ENCODE measurements at regions of chr16 and their contacts with region 1.

Region 1: GRCh38 chr16:55701442-55702319 is 45.9 kb downstream of the SLC6A2 start:
- DNase-seq: peak; percentile 66 to 68
- H3K4me3 ChIP-seq: no peak overlapping the region
- H3K4me3 Mint-ChIP-seq: no peak overlapping the region
- H3K27ac Mint-ChIP-seq: no peak overlapping the region
- H3K4me1 ChIP-seq: no peaks in the 10 kb centered on the region
- H3K4me1 Mint-ChIP-seq: no peaks in the 10 kb centered on the region
- H3K27me3 ChIP-seq: no peaks in the 10 kb centered on the region
- H3K27me3 Mint-ChIP-seq: peaks cover 14% of the 10 kb centered on the region
- CTCF ChIP-seq: peak; percentile 78 to 86

Region 2: GRCh38 chr16:55494994-55495421 is 206.7 kb before region 1 on chr16:
- CTCF ChIA-PET with region 1: interaction called, 12 read pairs
- POLR2A ChIA-PET with region 1: no interaction called
- intact Hi-C with region 1: loop called (anchors 1 kb)
- DNase-seq: peak; percentile 56 to 69
- H3K4me3 ChIP-seq: no peak overlapping the region
- H3K4me3 Mint-ChIP-seq: no peak overlapping the region
- H3K27ac Mint-ChIP-seq: no peak overlapping the region
- H3K4me1 ChIP-seq: peaks cover 9% of the 10 kb centered on the region; the same call in 1 of the 2 replicates
- H3K4me1 Mint-ChIP-seq: peaks cover 7% of the 10 kb centered on the region
- H3K27me3 ChIP-seq: no peaks in the 10 kb centered on the region
- H3K27me3 Mint-ChIP-seq: no peaks in the 10 kb centered on the region
- CTCF ChIP-seq: peak in 1 of 2 experiments; percentile 41

Region 3: DNA sequence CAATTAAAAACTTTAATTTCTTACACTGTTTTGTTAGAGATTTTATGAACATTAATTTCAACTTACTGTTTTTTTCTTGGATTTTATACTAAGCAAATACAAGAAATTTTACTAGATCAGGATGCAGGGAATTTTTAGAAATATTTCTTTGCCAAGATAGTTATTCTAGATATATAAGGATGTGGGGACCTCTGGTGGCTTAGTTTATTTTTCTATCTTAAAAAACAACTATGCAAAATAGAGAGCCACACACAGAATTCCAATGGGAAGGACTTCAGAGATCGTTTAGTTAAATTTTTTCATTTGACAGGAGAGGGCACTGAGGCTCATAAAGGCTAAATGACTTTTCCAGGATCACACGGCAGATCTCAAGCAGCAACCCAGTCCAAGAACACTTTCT is 158.2 kb before region 1 on chr16:
- CTCF ChIA-PET with region 1: interaction called, 7 read pairs
- POLR2A ChIA-PET with region 1: no interaction called
- intact Hi-C with region 1: loop called (anchors 1 kb)
- DNase-seq: peak in 1 of 2 experiments; percentile 30
- H3K4me3 ChIP-seq: no peak overlapping the region
- H3K4me3 Mint-ChIP-seq: no peak overlapping the region
- H3K27ac Mint-ChIP-seq: no peak overlapping the region
- H3K4me1 ChIP-seq: no peaks in the 10 kb centered on the region; the same call in 1 of the 2 replicates
- H3K4me1 Mint-ChIP-seq: no peaks in the 10 kb centered on the region
- H3K27me3 ChIP-seq: no peaks in the 10 kb centered on the region
- H3K27me3 Mint-ChIP-seq: no peaks in the 10 kb centered on the region
- CTCF ChIP-seq: peak in 1 of 2 experiments; percentile 37

Region 4: DNA sequence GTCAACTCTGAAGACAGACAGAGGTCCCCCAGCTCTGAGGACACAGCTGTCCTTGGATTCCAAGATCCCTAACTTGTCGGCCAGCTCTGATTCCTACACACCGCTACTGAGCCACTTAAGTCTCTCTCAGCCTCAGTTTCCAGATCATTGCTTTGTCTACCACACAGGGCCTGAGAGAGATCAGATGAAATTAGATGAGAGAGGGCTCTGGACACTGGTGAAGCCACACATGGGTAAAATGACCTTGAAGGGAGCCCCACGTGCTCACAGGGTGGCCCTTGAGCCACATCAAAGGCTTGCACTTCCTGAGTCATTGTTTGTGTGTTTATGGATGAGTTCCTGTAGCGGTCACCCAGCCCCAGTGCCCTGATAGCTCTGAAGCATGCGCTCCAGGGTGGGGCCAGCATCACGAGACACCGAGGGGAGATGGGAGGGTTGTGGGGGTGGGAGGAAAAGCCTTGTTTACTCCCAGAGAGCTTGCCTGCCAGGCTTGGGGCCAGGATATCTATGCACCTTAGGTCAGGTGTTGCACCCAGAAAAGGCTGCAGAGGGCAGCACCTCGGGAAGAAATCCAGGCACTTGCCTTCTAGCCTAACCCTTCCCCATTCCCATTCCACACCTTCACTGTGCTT is 78.6 kb before region 1 on chr16:
- CTCF ChIA-PET with region 1: no interaction called
- POLR2A ChIA-PET with region 1: no interaction called
- intact Hi-C with region 1: loop called (anchors 1 kb)
- DNase-seq: peak; percentile 67 to 69
- H3K4me3 ChIP-seq: no peak overlapping the region
- H3K4me3 Mint-ChIP-seq: no peak overlapping the region
- H3K27ac Mint-ChIP-seq: no peak overlapping the region
- H3K4me1 ChIP-seq: no peaks in the 10 kb centered on the region
- H3K4me1 Mint-ChIP-seq: peaks cover 9% of the 10 kb centered on the region
- H3K27me3 ChIP-seq: no peaks in the 10 kb centered on the region
- H3K27me3 Mint-ChIP-seq: peaks cover 5% of the 10 kb centered on the region
- CTCF ChIP-seq: peak; percentile 60 to 65

Region 5: GRCh38 chr16:55643161-55643970 is 58.3 kb before region 1 on chr16:
- CTCF ChIA-PET with region 1: interaction called, 3 read pairs
- POLR2A ChIA-PET with region 1: no interaction called
- intact Hi-C with region 1: loop called (anchors 5 kb)
- DNase-seq: peak in 1 of 2 experiments; percentile 47
- H3K4me3 ChIP-seq: no peak overlapping the region
- H3K4me3 Mint-ChIP-seq: no peak overlapping the region
- H3K27ac Mint-ChIP-seq: no peak overlapping the region
- H3K4me1 ChIP-seq: no peaks in the 10 kb centered on the region
- H3K4me1 Mint-ChIP-seq: no peaks in the 10 kb centered on the region
- H3K27me3 ChIP-seq: no peaks in the 10 kb centered on the region
- H3K27me3 Mint-ChIP-seq: peaks cover 14% of the 10 kb centered on the region
- CTCF ChIP-seq: peak in 1 of 2 experiments; percentile 40

Region 6: DNA sequence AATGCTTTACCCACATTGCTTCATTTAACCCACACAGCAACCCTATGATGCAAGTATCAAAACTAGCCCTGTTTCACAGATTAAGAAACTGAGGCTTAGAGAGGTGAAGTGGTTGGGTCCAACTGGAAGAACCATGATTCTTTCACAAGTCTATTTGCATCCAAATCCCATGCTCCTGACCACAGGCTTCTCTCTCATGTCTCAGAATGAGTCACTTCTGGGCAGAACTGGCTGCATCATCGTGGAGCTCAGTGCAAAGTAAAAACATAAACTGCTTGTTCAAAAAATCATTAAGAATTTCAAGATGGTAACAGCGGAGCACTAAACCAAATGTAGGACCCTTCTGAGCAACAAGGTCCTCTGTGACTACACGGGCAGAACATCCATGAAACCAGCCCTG is 151.4 kb after region 1 on chr16:
- CTCF ChIA-PET with region 1: no interaction called
- POLR2A ChIA-PET with region 1: no interaction called
- intact Hi-C with region 1: no loop called
- DNase-seq: no peak
- H3K4me3 ChIP-seq: no peak overlapping the region
- H3K4me3 Mint-ChIP-seq: no peak overlapping the region
- H3K27ac Mint-ChIP-seq: no peak overlapping the region
- H3K4me1 ChIP-seq: no peaks in the 10 kb centered on the region
- H3K4me1 Mint-ChIP-seq: no peaks in the 10 kb centered on the region
- H3K27me3 ChIP-seq: peaks cover 1% of the 10 kb centered on the region
- H3K27me3 Mint-ChIP-seq: peaks cover 24% of the 10 kb centered on the region
- CTCF ChIP-seq: no peak

Region 7: GRCh38 chr16:55933038-55933437 is 231.4 kb after region 1 on chr16:
- CTCF ChIA-PET with region 1: no interaction called
- POLR2A ChIA-PET with region 1: no interaction called
- intact Hi-C with region 1: no loop called
- DNase-seq: no peak
- H3K4me3 ChIP-seq: no peak overlapping the region
- H3K4me3 Mint-ChIP-seq: no peak overlapping the region
- H3K27ac Mint-ChIP-seq: no peak overlapping the region
- H3K4me1 ChIP-seq: no peaks in the 10 kb centered on the region
- H3K4me1 Mint-ChIP-seq: no peaks in the 10 kb centered on the region
- H3K27me3 ChIP-seq: no peaks in the 10 kb centered on the region
- H3K27me3 Mint-ChIP-seq: peaks cover 12% of the 10 kb centered on the region
- CTCF ChIP-seq: no peak

Measured in Caco-2 (cell line).